PC-9 (cell line): ENCODE measurements at regions of chr12 and their contacts with region 1.

Region 1: DNA sequence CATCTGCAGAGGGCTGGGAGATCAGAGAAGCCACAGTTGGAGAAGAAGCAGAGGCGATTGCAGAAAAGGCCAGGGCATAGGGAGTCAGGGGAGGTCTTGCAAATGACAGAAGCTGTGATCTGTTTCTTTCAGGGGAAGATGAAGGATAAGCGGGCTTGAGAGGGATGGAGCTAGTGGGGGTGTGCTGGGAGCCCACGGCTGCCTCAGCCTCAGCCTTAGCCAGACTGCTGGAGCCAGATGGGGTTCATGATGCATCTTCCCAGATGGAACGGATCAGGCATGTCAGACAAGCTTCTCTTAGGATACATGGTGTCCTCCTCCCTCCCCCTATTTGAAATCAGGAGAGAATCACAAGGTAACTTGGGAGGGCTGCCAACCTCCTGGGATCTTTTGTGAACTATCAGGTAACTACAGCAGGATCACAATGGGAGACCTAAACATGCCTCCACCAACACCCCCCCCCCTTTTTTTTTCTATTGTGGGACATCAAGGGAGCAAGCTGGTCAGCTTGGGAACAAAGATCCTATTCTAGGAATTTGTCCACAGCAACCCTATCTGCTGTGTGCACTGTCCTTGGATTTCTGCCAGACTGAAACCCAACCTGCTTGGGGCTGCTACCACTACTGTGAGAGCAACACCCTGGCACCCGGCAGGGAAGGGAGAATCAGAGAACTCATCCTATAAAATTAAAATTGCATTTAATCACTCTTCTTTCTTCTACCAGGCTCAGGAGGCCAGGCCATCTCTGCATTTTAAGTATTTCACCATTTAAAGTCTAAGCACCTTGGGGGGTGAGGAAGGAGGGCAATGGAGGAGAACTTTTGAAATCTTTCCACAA is 10.7 kb upstream of the ATP2A2 start:
- DNase-seq: peak; percentile 62 to 74
- H3K4me3 ChIP-seq: peak overlapping the region; percentile 18; the same call in 1 of the 2 replicates
- H3K27ac ChIP-seq: peak overlapping the region; percentile 45
- H3K4me1 ChIP-seq: peaks cover 34% of the 10 kb centered on the region
- H3K27me3 ChIP-seq: no peaks in the 10 kb centered on the region
- CTCF ChIP-seq: no peak

Region 2: GRCh38 chr12:110141389-110141788 is 129.0 kb before region 1 on chr12:
- CTCF ChIA-PET with region 1: no interaction called
- POLR2A ChIA-PET with region 1: interaction called, 10 read pairs
- intact Hi-C with region 1: no loop called
- DNase-seq: no peak
- H3K4me3 ChIP-seq: no peak overlapping the region
- H3K27ac ChIP-seq: no peak overlapping the region
- H3K4me1 ChIP-seq: no peaks in the 10 kb centered on the region
- H3K27me3 ChIP-seq: no peaks in the 10 kb centered on the region
- CTCF ChIP-seq: no peak

Region 3: DNA sequence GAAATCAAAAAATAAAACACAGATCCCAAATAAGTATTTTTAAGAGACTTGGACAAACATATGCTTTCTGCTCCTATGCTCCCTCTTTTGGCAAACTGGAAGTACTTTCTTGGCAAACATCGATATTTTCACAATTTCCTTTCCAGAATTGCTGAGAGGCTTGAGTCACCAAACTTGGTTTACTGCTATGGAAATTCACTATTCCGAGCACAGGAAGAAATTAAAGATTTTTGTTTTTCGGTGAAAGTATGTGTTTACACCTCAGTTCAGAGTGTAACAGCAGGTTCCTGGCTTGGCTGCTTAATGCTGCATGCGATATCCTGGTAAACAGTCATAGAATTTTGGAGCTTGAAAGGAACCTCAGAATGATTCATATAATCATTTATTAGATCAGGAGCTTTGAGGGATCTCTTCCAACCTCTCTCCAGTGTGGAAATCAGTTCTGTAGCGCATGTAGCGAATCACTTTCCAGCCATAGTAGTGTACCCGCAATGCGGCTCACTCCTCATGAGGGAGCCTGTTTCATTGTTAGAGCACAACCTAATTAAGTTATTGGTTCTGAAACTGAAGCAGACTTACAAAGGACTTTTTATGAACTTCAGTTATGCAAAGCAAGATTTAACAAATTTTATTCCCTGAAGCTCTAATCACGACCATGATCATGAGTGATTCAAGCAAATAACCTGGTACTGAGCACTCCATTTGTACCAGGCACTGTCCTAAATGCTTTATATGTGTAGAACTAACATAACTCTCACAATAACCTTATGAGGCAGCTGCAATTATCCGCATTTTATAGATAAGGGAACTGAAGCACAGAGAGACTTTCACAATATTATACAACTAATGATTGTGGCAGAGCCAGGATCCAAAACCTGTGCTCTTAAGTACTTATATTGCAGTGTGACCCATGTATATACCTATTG is 45.7 kb before region 1 on chr12:
- CTCF ChIA-PET with region 1: no interaction called
- POLR2A ChIA-PET with region 1: no interaction called
- intact Hi-C with region 1: loop called (anchors 2 kb)
- DNase-seq: peak in 1 of 2 experiments; percentile 64
- H3K4me3 ChIP-seq: peak overlapping the region; percentile 10; the same call in 1 of the 2 replicates
- H3K27ac ChIP-seq: peak overlapping the region; percentile 79
- H3K4me1 ChIP-seq: peaks cover 34% of the 10 kb centered on the region
- H3K27me3 ChIP-seq: no peaks in the 10 kb centered on the region
- CTCF ChIP-seq: peak; percentile 46

Region 4: GRCh38 chr12:110247333-110248104 is 22.8 kb before region 1 on chr12:
- CTCF ChIA-PET with region 1: no interaction called
- POLR2A ChIA-PET with region 1: interaction called, 4 read pairs
- intact Hi-C with region 1: loop called (anchors 2 kb)
- DNase-seq: peak; percentile 71 to 89
- H3K4me3 ChIP-seq: peak overlapping the region; percentile 41
- H3K27ac ChIP-seq: peak overlapping the region; percentile 95
- H3K4me1 ChIP-seq: peaks cover 46% of the 10 kb centered on the region
- H3K27me3 ChIP-seq: no peaks in the 10 kb centered on the region
- CTCF ChIP-seq: no peak

Region 5: GRCh38 chr12:110280779-110281548 is 10.6 kb after region 1 on chr12 and contains the start of gene ATP2A2:
- CTCF ChIA-PET with region 1: interaction called, 3 read pairs
- POLR2A ChIA-PET with region 1: interaction called, 16 read pairs
- intact Hi-C with region 1: loop called (anchors 1 kb)
- DNase-seq: peak; percentile 64 to 90
- H3K4me3 ChIP-seq: peak within 1 kb of the TSS; percentile 96
- H3K27ac ChIP-seq: peak within 1 kb of the TSS; percentile 85
- H3K4me1 ChIP-seq: peaks cover 33% of the 10 kb centered on the region
- H3K27me3 ChIP-seq: no peaks in the 10 kb centered on the region
- CTCF ChIP-seq: no peak
- total RNA-seq, gene ATP2A2: 127 and 154 TPM in 2 replicates

Region 6: DNA sequence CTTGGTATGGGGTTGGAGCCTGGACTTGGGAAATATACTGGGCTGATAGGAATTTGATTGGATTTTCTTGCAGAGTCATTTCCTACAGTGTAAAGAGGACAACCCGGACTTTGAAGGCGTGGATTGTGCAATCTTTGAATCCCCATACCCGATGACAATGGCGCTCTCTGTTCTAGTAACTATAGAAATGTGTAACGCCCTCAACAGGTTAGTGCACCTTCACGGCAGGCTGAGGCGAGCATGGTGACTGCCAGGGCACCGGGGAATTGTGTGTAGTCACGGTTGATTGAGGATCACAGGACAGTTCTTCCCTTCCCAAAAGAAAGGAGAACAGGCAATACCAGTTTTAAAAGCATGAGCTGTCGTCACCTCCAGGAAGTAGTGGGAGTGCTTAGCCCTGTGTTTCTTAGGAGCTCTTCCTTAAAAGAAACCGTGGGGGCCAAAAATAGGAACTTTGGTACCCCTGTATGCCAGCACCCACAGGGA is 74.9 kb after region 1 on chr12:
- CTCF ChIA-PET with region 1: no interaction called
- POLR2A ChIA-PET with region 1: no interaction called
- intact Hi-C with region 1: loop called (anchors 2 kb)
- DNase-seq: peak; percentile 91 to 99
- H3K4me3 ChIP-seq: 0 out of 2 replicates have a peak overlapping the region, but pooled peaks have one; percentile 1
- H3K27ac ChIP-seq: peak overlapping the region; percentile 91
- H3K4me1 ChIP-seq: peaks cover 34% of the 10 kb centered on the region
- H3K27me3 ChIP-seq: no peaks in the 10 kb centered on the region
- CTCF ChIP-seq: no peak